Adrenal gland (tissue), 19 donors: ENCODE measurements at regions of chr12 and their contacts with region 1.

Region 1: DNA sequence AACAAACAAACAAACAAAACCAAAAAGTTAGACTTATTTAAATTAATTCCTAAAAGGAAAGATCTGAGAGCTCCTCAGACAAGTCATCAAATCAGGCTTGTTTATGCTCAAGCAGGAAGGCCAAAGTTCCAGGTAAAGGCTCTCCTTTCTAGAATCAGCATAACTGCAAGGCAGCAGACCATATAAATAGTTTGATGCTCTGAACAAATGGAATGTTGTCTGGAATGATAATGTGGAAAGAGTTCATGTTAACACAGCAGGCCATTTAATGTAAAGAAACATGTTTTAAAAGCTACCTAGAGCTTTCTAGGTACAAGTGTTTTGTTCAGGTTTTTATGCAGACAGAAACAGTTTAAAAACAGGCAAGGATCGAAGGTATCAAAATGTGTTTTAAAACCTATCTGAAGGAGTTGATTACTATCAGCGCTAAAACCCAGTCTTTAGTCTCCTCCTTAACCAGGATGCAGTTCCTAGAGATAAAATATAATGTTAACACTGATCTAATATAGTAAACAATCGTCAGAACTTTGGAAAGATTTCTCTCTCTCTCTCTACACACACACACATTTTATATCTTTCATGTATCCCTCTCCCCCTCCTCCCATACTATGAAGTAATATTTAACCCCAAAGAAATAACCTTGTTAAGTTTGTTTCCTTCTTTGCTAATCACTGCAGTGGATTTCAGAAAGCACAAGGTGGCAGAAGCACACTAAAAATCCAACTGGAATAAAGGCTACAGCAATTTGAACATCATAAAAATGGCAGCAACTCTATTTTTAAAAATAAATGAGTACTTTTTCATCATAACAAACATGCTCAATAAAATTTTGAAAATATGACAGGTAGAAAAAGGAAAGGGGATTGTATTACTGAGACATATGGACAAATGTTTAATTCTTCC is 135.5 kb downstream of the PAWR start:
- DNase-seq: no peak
- H3K4me3 ChIP-seq: no peak overlapping the region
- H3K27ac ChIP-seq: no peak overlapping the region
- H3K4me1 ChIP-seq: peaks cover 0 to 5% of the 10 kb centered on the region in 2 donors
- H3K27me3 ChIP-seq: no peaks in the 10 kb centered on the region
- CTCF ChIP-seq: peak; percentile 27 to 73 (median 62)
- POLR2A ChIP-seq: no peak

Region 2: DNA sequence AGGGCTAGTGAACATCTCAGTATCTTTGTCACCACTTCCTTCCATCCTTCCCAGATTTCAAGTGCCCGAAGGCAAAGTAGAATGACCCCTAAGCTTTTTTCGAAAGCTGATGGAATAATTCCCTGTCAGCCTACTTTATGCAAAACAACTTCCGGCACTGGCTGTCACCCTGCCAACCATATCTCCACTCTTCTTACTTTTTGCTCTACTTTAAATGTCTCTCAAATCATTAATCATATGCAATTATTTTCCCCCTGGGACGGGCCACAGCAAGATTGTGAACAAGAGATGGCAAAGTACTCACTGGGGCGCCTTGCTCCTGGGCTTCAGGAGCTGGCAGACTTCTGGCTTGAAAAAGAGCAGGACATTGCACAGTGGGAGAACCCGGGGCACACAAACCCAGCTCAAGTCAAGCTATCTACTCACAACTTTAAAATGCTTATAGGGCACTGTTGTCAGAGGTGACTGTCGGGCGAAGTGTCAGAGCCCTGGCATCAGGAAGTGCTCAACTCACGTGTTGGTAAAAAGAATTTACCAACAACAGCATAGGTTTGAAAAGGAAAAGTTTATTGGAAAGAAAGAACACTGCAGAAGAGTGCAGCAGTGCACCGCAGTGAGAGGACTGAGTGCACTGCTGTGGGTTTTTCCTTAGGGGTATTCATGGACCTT is 238.0 kb before region 1 on chr12:
- intact Hi-C with region 1: no loop called
- DNase-seq: peak in 1 of 7 donors; percentile 2
- H3K4me3 ChIP-seq: no peak overlapping the region
- H3K27ac ChIP-seq: no peak overlapping the region
- H3K4me1 ChIP-seq: no peaks in the 10 kb centered on the region
- H3K27me3 ChIP-seq: no peaks in the 10 kb centered on the region
- CTCF ChIP-seq: no peak
- POLR2A ChIP-seq: no peak

Region 3: DNA sequence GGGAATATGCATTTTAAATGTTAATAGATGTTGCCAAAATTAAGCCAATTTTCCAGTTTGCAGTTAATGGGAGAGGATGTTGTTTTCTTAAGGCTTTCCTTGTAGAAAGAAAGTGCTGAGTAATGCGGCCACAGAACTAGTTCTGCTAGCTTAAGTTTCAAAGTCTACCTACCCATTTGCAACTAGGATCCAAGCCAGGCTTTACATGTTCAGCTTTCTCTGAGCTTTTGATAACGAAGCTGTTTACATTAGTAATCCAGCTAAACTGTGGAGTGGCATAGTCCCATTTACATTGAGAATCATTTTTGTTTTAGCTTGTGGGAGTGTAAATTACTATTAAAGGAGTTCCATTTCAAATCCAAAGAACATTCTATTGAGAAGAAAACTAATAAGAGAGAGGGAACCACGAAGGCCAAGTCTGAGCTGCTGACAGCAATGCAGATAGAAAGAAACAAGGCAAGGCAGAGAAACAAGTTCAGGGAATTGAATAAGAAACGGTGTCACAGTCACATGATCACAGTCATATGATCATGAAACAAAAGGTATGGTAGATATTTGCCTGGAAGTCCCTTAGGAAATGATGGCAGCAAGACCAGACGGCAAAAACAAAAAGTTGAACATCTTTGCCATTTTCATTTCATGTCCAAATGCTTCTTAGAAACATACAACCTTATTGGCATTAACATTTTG is 139.4 kb before region 1 on chr12:
- intact Hi-C with region 1: loop called in 1 of 2 experiments (anchors 10 kb)
- DNase-seq: no peak
- H3K4me3 ChIP-seq: no peak overlapping the region
- H3K27ac ChIP-seq: no peak overlapping the region
- H3K4me1 ChIP-seq: peaks cover 0 to 8% of the 10 kb centered on the region in 2 donors
- H3K27me3 ChIP-seq: no peaks in the 10 kb centered on the region
- CTCF ChIP-seq: no peak
- POLR2A ChIP-seq: no peak

Region 4: GRCh38 chr12:79597910-79598309 is 42.6 kb after region 1 on chr12:
- intact Hi-C with region 1: no loop called
- DNase-seq: no peak
- H3K4me3 ChIP-seq: no peak overlapping the region
- H3K27ac ChIP-seq: no peak overlapping the region
- H3K4me1 ChIP-seq: no peaks in the 10 kb centered on the region
- H3K27me3 ChIP-seq: no peaks in the 10 kb centered on the region
- CTCF ChIP-seq: no peak
- POLR2A ChIP-seq: no peak

Region 5: DNA sequence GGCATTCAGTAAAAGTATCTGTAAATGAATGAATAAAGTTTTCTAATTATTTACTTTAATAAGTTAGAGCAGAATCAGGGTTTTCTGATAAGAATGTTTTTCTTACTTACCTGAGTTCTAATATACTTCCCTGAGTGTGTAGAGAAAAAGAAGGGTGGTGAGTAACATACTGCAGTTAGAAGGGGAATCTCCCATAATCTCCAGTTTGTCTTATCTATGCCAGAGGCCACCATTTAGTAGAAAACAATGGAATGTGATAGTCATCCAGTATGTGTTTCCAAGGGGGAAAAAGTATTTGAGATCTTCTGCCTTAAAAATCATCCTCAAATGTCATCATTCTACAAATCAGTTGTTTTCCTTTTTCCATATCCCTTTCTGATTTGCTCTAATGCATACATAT is 192.0 kb after region 1 on chr12:
- intact Hi-C with region 1: loop called in 1 of 2 experiments (anchors 10 kb)
- DNase-seq: no peak
- H3K4me3 ChIP-seq: no peak overlapping the region
- H3K27ac ChIP-seq: no peak overlapping the region
- H3K4me1 ChIP-seq: no peaks in the 10 kb centered on the region
- H3K27me3 ChIP-seq: no peaks in the 10 kb centered on the region
- CTCF ChIP-seq: no peak
- POLR2A ChIP-seq: no peak

Region 6: GRCh38 chr12:80053048-80053790 is 497.9 kb after region 1 on chr12:
- intact Hi-C with region 1: no loop called
- DNase-seq: peak; percentile 76 to 89 (median 85)
- H3K4me3 ChIP-seq: no peak overlapping the region
- H3K27ac ChIP-seq: peak overlapping the region in 1 of 5 donors; percentile 11
- H3K4me1 ChIP-seq: peaks cover 0 to 9% of the 10 kb centered on the region in 2 donors
- H3K27me3 ChIP-seq: no peaks in the 10 kb centered on the region
- CTCF ChIP-seq: no peak
- POLR2A ChIP-seq: no peak

Region 7: GRCh38 chr12:80186727-80187217 is 631.5 kb after region 1 on chr12:
- intact Hi-C with region 1: loop called in 1 of 2 experiments (anchors 10 kb)
- DNase-seq: peak; percentile 63 to 85 (median 73)
- H3K4me3 ChIP-seq: no peak overlapping the region
- H3K27ac ChIP-seq: peak overlapping the region in 3 of 5 donors; percentile 54 to 85 (median 65)
- H3K4me1 ChIP-seq: peaks cover 0 to 13% of the 10 kb centered on the region in 2 donors
- H3K27me3 ChIP-seq: no peaks in the 10 kb centered on the region
- CTCF ChIP-seq: peak; percentile 57 to 84 (median 78)
- POLR2A ChIP-seq: no peak

Region 8: DNA sequence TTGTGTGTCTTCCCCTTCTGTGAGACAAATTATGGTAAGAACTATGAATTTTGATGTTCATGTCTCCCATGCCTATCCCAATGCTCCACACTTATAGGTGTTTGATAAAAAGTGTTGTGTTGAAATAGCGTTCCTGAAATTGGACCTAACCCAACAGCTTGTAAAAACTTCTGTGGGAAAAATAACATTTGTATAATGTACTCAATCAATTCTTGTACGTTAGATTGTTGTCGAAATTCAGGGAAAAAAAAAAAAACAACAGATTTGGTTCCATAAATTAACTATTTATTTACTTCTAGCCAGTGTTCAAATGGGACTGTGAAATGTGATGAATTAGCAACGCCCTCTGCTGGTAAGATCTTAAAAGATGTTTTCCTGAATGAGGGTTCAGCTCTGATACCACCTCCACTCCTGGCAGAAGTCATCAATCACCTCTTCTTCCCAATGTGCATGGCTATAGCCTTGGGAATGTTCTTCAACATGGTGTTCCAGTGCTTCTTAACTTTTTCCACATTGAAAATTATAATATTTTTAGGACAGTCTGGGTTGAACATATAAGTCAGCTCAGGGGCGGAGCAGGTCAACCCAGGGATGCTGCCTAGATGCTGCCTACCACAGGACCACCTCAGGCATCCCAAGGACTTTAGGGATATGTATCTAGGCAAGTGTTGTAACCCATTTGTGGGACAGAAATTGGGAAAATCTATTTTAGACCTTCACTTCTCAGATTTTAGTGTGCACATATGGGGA is 714.7 kb after region 1 on chr12:
- intact Hi-C with region 1: loop called in 1 of 2 experiments (anchors 10 kb)
- DNase-seq: peak in 1 of 7 donors; percentile 1
- H3K4me3 ChIP-seq: no peak overlapping the region
- H3K27ac ChIP-seq: no peak overlapping the region
- H3K4me1 ChIP-seq: no peaks in the 10 kb centered on the region
- H3K27me3 ChIP-seq: no peaks in the 10 kb centered on the region
- CTCF ChIP-seq: peak; percentile 29 to 68 (median 52)
- POLR2A ChIP-seq: no peak